Ascending aorta (tissue), 2 donors: ENCODE measurements at regions of chr6 and their contacts with region 1.

Region 1: GRCh38 chr6:138115877-138116660 is 8.8 kb upstream of the PERP start:
- DNase-seq: no peak
- H3K4me3 ChIP-seq: no peak overlapping the region
- H3K27ac ChIP-seq: no peak overlapping the region
- H3K4me1 ChIP-seq: no peaks in the 10 kb centered on the region
- H3K27me3 ChIP-seq: no peaks in the 10 kb centered on the region
- CTCF ChIP-seq: peak; percentile 50 to 75 (median 70)

Region 2: GRCh38 chr6:138287144-138287955 is 171.3 kb after region 1 on chr6:
- intact Hi-C with region 1: loop called (anchors 5 kb)
- DNase-seq: no peak
- H3K4me3 ChIP-seq: no peak overlapping the region
- H3K27ac ChIP-seq: no peak overlapping the region
- H3K4me1 ChIP-seq: no peaks in the 10 kb centered on the region
- H3K27me3 ChIP-seq: no peaks in the 10 kb centered on the region
- CTCF ChIP-seq: peak in 2 of 3 experiments; percentile 31 to 40

Region 3: GRCh38 chr6:138517635-138518034 is 401.6 kb after region 1 on chr6:
- intact Hi-C with region 1: loop called (anchors 1 kb)
- DNase-seq: no peak
- H3K4me3 ChIP-seq: no peak overlapping the region
- H3K27ac ChIP-seq: no peak overlapping the region
- H3K4me1 ChIP-seq: no peaks in the 10 kb centered on the region
- H3K27me3 ChIP-seq: no peaks in the 10 kb centered on the region
- CTCF ChIP-seq: peak in 2 of 3 experiments; percentile 54 to 59

Region 4: GRCh38 chr6:138765896-138766655 is 650.0 kb after region 1 on chr6:
- intact Hi-C with region 1: loop called (anchors 5 kb)
- DNase-seq: no peak
- H3K4me3 ChIP-seq: no peak overlapping the region
- H3K27ac ChIP-seq: no peak overlapping the region
- H3K4me1 ChIP-seq: no peaks in the 10 kb centered on the region
- H3K27me3 ChIP-seq: no peaks in the 10 kb centered on the region
- CTCF ChIP-seq: peak; percentile 48 to 61 (median 49)